ENCODE measurements at regions of chr3 and their contacts with region 1.

Region 1: GRCh38 chr3:107429320-107430181 is 52.3 kb downstream of the CCDC54 start:
- DNase-seq: peak; percentile 82
- ATAC-seq: peak; percentile 85

Region 2: DNA sequence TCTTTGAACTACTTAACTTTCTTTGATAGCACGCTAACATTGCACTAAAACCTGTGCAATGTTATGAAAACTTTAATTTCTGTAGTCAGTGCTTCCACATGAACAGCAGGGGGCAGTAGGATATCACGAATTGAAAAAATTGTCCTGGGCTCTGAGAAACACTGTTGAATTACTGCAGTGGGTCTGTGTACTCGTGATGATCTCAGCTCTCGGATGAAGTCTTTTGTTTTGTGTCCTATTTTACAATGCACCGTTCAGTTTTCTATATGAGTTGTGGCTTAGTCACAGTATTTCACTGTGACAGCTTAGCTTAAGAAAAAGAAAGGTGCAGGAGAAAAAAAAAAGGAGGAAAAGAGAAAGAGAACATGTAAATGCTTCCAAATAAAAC is 193.6 kb before region 1 on chr3:
- intact Hi-C with region 1: loop called (anchors 10 kb)
- DNase-seq: no peak
- ATAC-seq: peak; percentile 76

Region 3: DNA sequence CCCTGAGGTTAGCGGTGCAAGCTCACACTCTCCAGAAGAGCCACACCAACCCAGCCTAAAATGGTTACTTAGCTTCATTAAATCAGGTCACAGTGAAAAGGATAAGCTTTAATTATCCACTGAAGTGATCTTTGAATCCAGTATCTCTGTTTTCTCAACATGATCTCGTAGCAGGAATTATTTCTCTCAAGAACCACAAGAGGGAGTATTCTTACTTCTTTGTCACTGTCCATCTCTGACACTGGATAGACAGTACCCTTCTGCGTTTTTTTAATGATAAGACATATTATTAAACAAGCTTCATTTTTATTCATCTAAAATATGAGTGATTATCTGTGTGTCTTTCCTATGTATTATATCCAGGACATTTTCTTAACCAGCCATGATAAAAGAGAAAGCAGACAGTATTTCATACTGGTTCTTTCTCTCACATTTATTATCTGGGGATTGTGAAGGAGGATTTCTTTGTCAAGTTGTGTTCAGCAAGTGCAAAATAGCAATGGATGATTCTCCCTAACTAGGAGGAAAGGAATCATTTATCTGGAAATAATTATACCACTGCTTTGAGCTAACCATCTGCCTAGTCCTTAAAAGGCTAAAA is 157.7 kb before region 1 on chr3:
- intact Hi-C with region 1: loop called (anchors 10 kb)
- DNase-seq: no peak
- ATAC-seq: peak; percentile 70

Region 4: DNA sequence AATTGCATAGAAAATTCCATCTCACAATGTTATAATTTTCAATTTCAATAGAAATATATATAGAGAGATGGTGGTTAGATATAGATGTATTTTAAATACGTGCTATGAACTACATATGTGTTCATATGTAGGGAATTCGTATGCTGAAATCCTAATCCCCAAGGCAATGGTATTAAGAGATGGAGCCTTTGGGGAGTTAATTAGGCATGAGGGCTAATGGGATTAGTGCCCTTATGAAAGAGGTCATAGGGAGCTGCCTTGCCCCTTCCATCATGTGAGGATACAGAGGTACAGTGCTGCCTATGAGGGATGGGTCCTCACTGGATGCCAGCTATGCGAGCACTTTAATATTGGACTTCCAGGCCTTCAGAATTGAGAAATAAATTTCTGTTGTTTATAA is 132.0 kb before region 1 on chr3:
- intact Hi-C with region 1: no loop called
- DNase-seq: no peak
- ATAC-seq: no peak

Region 5: DNA sequence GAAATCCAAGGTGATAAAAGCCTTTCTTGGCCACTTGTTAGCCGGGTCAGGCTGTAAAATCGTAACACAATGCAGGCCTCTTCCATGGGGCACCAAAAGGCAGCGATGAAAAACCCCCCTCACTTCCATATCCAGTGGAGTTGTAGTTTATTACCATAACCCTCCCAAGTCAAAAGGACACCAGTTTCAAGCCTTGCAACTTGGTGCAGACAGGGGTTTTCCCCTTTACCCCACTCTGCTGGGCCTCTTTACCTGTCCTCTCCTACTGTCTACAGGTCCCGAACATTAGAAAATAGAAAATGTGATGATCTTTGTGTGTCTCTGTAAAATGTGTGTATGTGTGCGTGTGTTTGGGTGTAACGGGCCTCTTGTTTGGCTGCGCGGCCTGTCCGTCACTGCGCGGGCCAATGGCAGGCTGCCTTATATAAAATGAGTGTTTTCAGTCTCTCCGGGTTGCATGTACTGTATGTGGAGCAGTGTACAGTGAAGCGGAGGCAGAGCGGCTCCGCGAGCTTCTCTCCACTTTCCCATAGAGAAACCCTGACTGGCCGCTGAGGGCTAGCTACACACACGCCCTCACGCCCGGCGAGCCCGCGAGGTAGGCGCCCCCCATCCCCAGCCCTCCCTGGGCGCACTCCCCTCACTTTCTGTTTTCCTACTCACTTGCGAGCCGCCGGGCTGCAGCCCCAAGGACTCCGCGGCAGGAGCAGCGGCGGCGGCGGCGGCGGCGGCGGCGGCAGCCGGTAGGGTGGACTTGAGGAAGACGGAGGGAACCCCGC is 93.1 kb after region 1 on chr3 and contains the start of gene BBX:
- intact Hi-C with region 1: loop called (anchors 10 kb)
- DNase-seq: peak; percentile 94
- ATAC-seq: peak; percentile 96
- total RNA-seq, gene BBX: 43.8 TPM